Endothelial cell of umbilical vein (primary cell): ENCODE measurements at regions of chr4 and their contacts with region 1.

Region 1: GRCh38 chr4:145618932-145619638 is at the start of gene MMAA:
- DNase-seq: peak; percentile 89
- H3K4me3 ChIP-seq: peak within 1 kb of the TSS; percentile 87 to 98 (median 91)
- H3K27ac ChIP-seq: peak within 1 kb of the TSS; percentile 98
- H3K4me1 ChIP-seq: peaks cover 21% of the 10 kb centered on the region
- H3K27me3 ChIP-seq: no peaks in the 10 kb centered on the region
- CTCF ChIP-seq: peak; percentile 65 to 72
- POLR2A ChIP-seq: peak; percentile 85
- total RNA-seq, gene MMAA: 5.1 and 5.6 TPM in 2 replicates

Region 2: DNA sequence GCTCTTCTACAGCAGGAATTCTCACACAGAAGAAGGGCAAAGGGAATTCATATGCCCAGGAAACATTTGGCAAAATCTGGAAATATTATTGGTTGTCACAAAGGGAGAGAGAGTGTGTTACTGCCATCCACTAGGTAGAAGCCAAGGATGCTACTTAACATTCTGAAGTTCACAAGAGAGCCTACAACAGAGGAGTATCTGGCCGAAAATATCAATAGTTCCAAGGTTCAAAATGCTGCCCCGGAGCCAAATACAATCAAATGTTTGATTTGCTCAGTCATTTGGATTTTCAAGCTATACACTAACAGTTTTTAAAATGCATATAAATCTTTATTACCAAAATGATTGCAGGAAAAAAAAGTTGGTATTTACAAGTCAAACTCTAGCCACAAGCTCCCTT is 457.5 kb before region 1 on chr4:
- CTCF ChIA-PET with region 1: interaction called, 31 read pairs
- POLR2A ChIA-PET with region 1: no interaction called
- dilution Hi-C with region 1: no loop called
- intact Hi-C with region 1: no loop called
- DNase-seq: no peak
- H3K4me3 ChIP-seq: no peak overlapping the region
- H3K27ac ChIP-seq: no peak overlapping the region
- H3K4me1 ChIP-seq: no peaks in the 10 kb centered on the region
- H3K27me3 ChIP-seq: no peaks in the 10 kb centered on the region
- CTCF ChIP-seq: no peak
- POLR2A ChIP-seq: no peak

Region 3: DNA sequence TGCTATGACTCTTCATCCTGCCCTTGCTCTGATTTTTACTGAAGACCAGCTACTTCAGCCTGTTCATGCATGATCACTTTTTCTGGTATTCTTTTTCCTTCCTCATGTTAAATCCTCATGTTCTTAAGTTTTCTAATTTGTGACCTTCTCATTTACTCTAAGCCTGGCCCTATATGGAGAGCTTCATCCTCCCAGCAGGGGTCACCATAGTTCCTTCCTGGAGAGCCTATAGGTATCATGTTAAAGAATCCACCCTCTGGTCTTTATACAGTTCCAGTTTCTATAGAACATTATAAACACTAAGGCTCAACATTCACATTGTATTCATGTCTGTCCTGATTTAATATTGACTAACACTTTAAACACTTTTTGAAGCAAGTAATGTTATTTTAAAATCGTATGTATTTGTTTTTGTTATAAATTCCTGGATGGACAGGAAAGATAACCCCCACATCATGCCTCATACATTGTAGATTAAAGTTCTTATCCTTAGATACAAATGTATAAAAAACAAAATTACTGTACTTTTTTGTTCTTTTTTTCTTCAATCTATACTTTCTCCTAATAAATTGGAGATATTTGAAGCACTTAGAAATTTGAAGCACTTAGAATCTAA is 384.9 kb before region 1 on chr4:
- CTCF ChIA-PET with region 1: interaction called, 63 read pairs
- POLR2A ChIA-PET with region 1: no interaction called
- dilution Hi-C with region 1: no loop called
- intact Hi-C with region 1: no loop called
- DNase-seq: peak; percentile 65
- H3K4me3 ChIP-seq: no peak overlapping the region
- H3K27ac ChIP-seq: no peak overlapping the region
- H3K4me1 ChIP-seq: peaks cover 8% of the 10 kb centered on the region
- H3K27me3 ChIP-seq: no peaks in the 10 kb centered on the region
- CTCF ChIP-seq: peak; percentile 60 to 62
- POLR2A ChIP-seq: no peak

Region 4: DNA sequence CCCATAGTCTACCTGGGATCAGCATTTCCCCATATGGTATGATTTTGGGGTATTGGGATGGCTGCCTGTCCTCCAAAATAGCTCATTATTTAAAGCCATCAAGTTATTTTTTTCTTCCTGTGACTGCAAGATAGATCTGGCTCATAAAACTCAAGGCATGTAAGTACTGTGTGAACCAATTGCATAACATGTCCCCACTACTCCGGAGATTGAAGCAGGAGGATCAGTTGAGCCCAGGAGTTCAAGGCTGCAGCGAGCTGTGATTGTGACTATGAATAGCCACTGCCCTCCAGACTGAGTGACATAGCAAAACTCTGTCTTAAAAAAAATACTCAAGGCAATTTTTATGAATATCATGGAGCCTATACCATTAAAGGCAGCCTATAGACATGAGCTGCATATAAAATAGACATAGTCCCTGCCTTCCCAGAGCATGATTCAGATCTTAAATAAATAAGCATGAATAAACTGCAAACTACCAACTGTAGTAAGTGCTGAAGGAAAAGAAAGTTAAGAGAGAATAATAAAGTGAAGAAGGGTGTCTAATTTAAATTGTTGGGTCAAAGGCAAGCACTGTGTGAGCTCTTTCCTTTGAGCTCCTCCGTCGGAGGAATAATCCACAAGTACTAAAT is 16.8 kb before region 1 on chr4:
- CTCF ChIA-PET with region 1: interaction called, 10 read pairs
- POLR2A ChIA-PET with region 1: no interaction called
- dilution Hi-C with region 1: no loop called
- intact Hi-C with region 1: no loop called
- DNase-seq: no peak
- H3K4me3 ChIP-seq: no peak overlapping the region
- H3K27ac ChIP-seq: no peak overlapping the region
- H3K4me1 ChIP-seq: no peaks in the 10 kb centered on the region
- H3K27me3 ChIP-seq: peaks cover 7 to 13% of the 10 kb centered on the region in 2 experiments
- CTCF ChIP-seq: no peak
- POLR2A ChIP-seq: no peak

Region 5: DNA sequence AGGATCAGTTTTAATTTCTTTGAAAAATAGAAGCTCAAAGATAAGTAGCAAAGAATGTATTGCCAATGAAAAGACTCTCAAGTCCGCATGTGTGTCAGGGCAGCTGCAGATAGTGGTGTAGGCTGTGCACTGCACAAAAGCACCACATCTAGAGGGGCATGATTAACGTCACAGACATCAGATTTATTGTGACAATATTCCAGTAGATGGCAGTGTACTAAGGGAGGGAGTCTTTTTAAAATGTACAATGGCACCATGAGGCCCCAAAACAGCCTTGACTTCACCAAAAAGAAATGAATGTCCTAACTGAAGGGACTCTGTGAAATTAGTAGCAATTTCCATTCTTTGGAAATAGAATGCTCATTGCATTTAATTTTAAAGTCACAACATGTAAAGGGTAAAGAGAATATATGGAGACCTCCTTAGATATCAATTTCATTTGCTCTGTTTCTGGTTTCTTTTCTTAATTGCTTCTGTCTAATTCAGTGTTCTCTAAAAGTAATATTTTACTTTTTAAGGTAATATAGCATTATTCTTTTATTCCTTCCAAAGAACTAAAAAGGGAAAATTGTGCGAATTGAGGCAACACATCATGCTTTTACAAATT is 221.2 kb after region 1 on chr4:
- CTCF ChIA-PET with region 1: interaction called, 5 read pairs
- POLR2A ChIA-PET with region 1: no interaction called
- dilution Hi-C with region 1: no loop called
- intact Hi-C with region 1: loop called (anchors 2 kb)
- DNase-seq: peak; percentile 67
- H3K4me3 ChIP-seq: no peak overlapping the region
- H3K27ac ChIP-seq: no peak overlapping the region
- H3K4me1 ChIP-seq: peaks cover 28% of the 10 kb centered on the region
- H3K27me3 ChIP-seq: no peaks in the 10 kb centered on the region
- CTCF ChIP-seq: peak; percentile 33 to 48
- POLR2A ChIP-seq: no peak

Region 6: DNA sequence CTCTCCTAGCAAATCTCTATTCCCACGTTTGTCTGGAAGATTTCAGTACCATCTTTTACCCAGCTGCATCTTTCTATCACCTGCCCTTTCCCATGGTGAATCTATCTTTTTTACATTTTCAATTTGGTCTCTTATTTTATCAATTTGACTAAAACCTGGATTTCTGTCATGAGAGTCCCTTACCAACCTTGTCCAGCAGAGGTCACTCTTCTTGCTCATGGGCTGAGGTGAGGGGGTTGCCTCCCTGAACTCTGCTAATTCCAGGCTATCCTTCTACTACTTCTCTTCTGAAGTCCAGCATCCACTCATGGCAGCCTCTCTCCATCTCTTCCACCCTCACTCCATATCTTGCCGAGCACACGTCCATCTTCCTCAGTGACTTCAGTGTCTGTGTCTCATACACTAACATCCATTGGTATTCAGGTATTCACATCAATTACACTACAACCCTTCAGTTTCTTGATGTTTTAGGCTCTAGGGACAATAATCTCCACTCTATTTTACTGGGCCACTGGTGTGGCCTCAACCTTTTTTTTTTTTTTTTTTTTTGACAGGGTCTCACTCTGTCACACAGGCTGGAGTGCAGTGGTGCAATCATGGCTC is 337.3 kb after region 1 on chr4:
- CTCF ChIA-PET with region 1: no interaction called
- POLR2A ChIA-PET with region 1: no interaction called
- dilution Hi-C with region 1: no loop called
- intact Hi-C with region 1: loop called (anchors 5 kb)
- DNase-seq: peak; percentile 43
- H3K4me3 ChIP-seq: no peak overlapping the region
- H3K27ac ChIP-seq: no peak overlapping the region
- H3K4me1 ChIP-seq: peaks cover 10% of the 10 kb centered on the region
- H3K27me3 ChIP-seq: no peaks in the 10 kb centered on the region
- CTCF ChIP-seq: peak; percentile 68 to 77
- POLR2A ChIP-seq: no peak